Calu3 (cell line): ENCODE measurements at regions of chr7 and their contacts with region 1.

Region 1: DNA sequence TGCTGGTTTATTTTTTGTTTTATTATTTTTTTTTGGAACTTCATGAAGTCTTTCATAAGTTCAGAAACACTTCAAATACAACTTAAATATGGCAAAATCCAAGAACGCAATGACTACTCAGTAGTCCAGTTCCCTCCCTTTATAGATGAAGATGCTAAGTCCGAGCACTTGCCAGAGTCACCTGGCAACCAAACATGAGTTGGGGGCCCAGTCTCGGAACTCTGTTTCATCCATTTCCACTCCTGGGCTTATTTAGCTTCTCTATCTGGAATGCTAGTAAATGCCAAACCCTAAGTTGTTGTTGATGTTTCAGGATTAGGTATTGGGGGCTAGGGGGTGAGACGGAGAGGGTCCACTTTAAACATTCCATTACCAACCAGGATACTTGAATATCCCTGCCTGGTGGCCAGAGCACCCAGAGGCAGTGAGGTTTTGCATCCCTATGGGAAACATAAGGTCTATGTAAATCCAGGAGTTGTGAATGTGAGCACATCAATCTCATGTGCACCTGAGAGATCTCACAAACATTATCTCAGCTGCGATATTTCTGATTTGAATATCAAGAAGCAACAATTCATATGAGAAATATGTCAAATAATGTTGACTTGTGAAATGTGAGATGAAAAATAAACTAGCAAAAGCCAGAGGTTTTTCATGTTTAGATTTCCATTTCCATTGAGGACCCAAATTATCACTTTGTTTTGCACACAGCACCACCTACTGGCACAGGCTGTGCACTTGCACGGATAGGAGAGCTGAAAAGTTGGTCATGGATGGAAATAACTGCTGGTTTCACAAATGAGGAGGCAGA is 129.3 kb downstream of the PKD1L1 start:
- DNase-seq: peak; percentile 90
- H3K4me3 Mint-ChIP-seq: no peak overlapping the region
- H3K27ac Mint-ChIP-seq: no peak overlapping the region
- H3K4me1 Mint-ChIP-seq: peaks cover 23% of the 10 kb centered on the region
- H3K27me3 Mint-ChIP-seq: no peaks in the 10 kb centered on the region
- CTCF ChIP-seq: peak; percentile 96

Region 2: GRCh38 chr7:47273974-47274766 is 544.8 kb before region 1 on chr7:
- CTCF ChIA-PET with region 1: no interaction called
- intact Hi-C with region 1: loop called (anchors 2 kb)
- DNase-seq: no peak
- H3K4me3 Mint-ChIP-seq: no peak overlapping the region
- H3K27ac Mint-ChIP-seq: no peak overlapping the region
- H3K4me1 Mint-ChIP-seq: no peaks in the 10 kb centered on the region
- H3K27me3 Mint-ChIP-seq: no peaks in the 10 kb centered on the region
- CTCF ChIP-seq: no peak

Region 3: DNA sequence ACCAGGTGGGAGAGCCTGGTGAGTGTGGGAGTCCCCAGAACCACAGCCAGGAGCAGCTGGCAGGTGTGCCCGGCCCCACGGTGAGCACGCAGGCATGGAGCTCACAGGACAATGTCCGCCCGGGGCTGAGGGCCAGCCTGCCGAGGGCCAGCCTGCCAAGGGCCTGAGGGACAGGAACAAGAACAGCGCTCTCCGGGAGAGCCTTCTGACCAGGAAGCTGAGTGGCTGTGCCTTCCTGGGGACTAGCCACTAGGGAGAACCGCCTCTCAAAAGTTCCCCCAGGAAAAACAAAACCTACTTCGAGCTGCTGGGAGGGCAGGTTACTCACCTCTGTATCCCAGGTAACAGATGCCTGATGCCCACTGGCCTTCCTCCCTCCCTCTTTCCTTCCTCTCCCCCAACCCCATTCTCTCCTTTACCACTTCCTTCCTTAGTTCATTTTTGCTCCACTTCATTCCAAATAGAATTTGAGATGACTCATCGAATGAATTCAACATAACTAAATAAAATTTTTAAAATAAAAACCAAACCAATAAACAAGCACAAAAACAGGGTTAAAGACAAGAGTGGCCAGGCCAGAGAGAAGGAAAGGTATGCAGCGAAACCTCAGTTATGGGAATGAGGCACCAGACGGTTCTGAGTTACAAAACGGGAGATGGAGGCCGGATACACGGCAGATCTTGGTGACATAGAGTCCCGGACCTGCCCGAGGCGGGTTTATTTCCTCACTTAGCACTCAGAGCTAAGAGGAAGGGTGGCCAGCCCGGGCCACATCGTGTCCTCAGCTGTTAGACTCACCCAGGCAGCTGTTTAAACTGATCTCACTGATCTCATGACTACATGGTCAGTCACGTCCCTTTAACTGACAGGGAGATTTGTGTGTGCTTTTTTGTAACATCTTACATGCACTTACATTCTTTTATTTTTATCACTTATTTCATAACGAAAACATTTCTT is 365.6 kb before region 1 on chr7:
- CTCF ChIA-PET with region 1: no interaction called
- intact Hi-C with region 1: no loop called
- DNase-seq: no peak
- H3K4me3 Mint-ChIP-seq: no peak overlapping the region
- H3K27ac Mint-ChIP-seq: no peak overlapping the region
- H3K4me1 Mint-ChIP-seq: peaks cover 8% of the 10 kb centered on the region
- H3K27me3 Mint-ChIP-seq: no peaks in the 10 kb centered on the region
- CTCF ChIP-seq: no peak

Region 4: DNA sequence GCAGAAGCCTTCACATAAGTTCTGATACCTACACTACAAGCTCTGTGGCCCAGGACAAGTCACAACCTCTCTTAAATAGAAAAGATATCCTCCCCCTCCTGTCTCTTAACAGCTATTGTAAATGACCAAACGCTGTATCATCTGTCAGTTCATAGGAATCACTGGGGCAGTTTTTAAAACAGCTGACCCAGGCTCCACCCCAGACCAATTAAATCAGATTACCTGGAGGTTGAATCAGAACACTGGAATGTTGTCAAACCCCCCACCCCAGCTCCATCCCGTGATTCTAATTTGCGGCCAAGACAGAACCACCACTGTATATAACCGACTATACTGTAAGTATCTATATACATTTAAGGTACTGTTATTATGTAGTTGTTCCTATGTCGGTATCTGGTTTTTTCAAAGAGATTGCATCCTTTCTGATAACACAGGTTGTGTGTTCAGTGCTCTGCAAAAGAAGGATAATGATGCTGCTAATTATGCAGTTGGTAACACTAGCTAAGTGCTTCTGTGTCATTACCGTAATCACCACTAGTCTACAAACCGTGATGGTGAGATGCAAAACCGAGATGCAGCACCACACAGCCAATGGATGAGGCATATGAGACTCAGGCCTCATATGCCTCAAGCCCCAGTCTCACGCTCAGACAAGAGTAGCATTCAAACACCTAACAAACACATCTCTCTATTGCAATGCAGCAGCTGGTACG is 284.5 kb before region 1 on chr7:
- CTCF ChIA-PET with region 1: interaction called, 3 read pairs
- intact Hi-C with region 1: loop called (anchors 2 kb)
- DNase-seq: peak; percentile 84
- H3K4me3 Mint-ChIP-seq: no peak overlapping the region
- H3K27ac Mint-ChIP-seq: peak overlapping the region; percentile 42
- H3K4me1 Mint-ChIP-seq: peaks cover 53% of the 10 kb centered on the region
- H3K27me3 Mint-ChIP-seq: no peaks in the 10 kb centered on the region
- CTCF ChIP-seq: peak; percentile 39

Region 5: GRCh38 chr7:47605816-47606575 is 213.0 kb before region 1 on chr7:
- CTCF ChIA-PET with region 1: interaction called, 3 read pairs
- intact Hi-C with region 1: loop called (anchors 1 kb)
- DNase-seq: no peak
- H3K4me3 Mint-ChIP-seq: no peak overlapping the region
- H3K27ac Mint-ChIP-seq: peak overlapping the region; percentile 88
- H3K4me1 Mint-ChIP-seq: peaks cover 67% of the 10 kb centered on the region
- H3K27me3 Mint-ChIP-seq: no peaks in the 10 kb centered on the region
- CTCF ChIP-seq: no peak

Region 6: GRCh38 chr7:47786557-47787248 is 32.3 kb before region 1 on chr7:
- CTCF ChIA-PET with region 1: interaction called, 6 read pairs
- intact Hi-C with region 1: loop called (anchors 2 kb)
- DNase-seq: peak; percentile 99
- H3K4me3 Mint-ChIP-seq: peak overlapping the region; percentile 34
- H3K27ac Mint-ChIP-seq: peak overlapping the region; percentile 87
- H3K4me1 Mint-ChIP-seq: peaks cover 73% of the 10 kb centered on the region
- H3K27me3 Mint-ChIP-seq: no peaks in the 10 kb centered on the region
- CTCF ChIP-seq: no peak

Region 7: GRCh38 chr7:47979145-47979831 is 160.3 kb after region 1 on chr7 and contains the start of gene HUS1:
- CTCF ChIA-PET with region 1: no interaction called
- intact Hi-C with region 1: no loop called
- DNase-seq: peak; percentile 93
- H3K4me3 Mint-ChIP-seq: peak within 1 kb of the TSS; percentile 73
- H3K27ac Mint-ChIP-seq: peak within 1 kb of the TSS; percentile 57
- H3K4me1 Mint-ChIP-seq: peaks cover 12% of the 10 kb centered on the region
- H3K27me3 Mint-ChIP-seq: no peaks in the 10 kb centered on the region
- CTCF ChIP-seq: no peak
- total RNA-seq, gene HUS1: 42.9 and 51.3 TPM in 2 replicates